Aorta (tissue), 5 donors: ENCODE measurements at regions of chr15 and their contacts with region 1.

Region 1: GRCh38 chr15:49421991-49422390 is 1.1 kb upstream of the FGF7 start:
- DNase-seq: peak; percentile 53 to 73
- ATAC-seq: peak; percentile 87
- H3K4me3 ChIP-seq: peak overlapping the region in 1 of 2 donors; percentile 34
- H3K27ac ChIP-seq: no peak overlapping the region
- H3K4me1 ChIP-seq: no peaks in the 10 kb centered on the region
- H3K27me3 ChIP-seq: no peaks in the 10 kb centered on the region

Region 2: GRCh38 chr15:49168016-49168415 is 254.0 kb before region 1 on chr15:
- intact Hi-C with region 1: no loop called
- DNase-seq: no peak
- ATAC-seq: no peak
- H3K4me3 ChIP-seq: no peak overlapping the region
- H3K27ac ChIP-seq: no peak overlapping the region
- H3K4me1 ChIP-seq: no peaks in the 10 kb centered on the region
- H3K27me3 ChIP-seq: no peaks in the 10 kb centered on the region

Region 3: GRCh38 chr15:49901996-49902684 is 480.1 kb after region 1 on chr15:
- intact Hi-C with region 1: no loop called
- DNase-seq: no peak
- ATAC-seq: peak; percentile 62
- H3K4me3 ChIP-seq: no peak overlapping the region
- H3K27ac ChIP-seq: peak overlapping the region; percentile 28 to 69
- H3K4me1 ChIP-seq: peaks cover 0 to 5% of the 10 kb centered on the region in 2 donors
- H3K27me3 ChIP-seq: no peaks in the 10 kb centered on the region

Region 4: DNA sequence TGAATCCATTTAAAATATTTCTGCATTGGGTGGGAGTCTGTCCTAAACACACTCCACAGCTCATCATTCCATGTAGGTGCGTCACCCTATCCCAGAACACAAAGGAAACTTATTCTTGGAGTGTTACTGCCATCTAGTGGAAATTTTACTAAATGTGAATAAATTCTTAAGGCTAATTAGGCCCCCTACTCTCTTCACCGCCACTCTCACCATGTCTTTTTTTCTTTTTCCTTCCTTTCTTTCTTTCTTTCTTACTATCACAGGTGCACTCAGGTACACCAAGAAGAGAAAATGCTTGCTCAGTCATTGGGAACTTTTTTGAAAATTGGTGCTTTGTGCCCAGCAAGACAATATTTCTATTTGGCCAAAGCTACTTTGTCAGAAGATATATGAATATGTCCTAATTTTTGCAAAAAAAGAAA is 723.5 kb after region 1 on chr15:
- intact Hi-C with region 1: loop called in 1 of 2 experiments (anchors 10 kb)
- DNase-seq: no peak
- ATAC-seq: peak; percentile 91
- H3K4me3 ChIP-seq: no peak overlapping the region
- H3K27ac ChIP-seq: no peak overlapping the region
- H3K4me1 ChIP-seq: no peaks in the 10 kb centered on the region
- H3K27me3 ChIP-seq: no peaks in the 10 kb centered on the region